Transverse colon (tissue), 4 donors: ENCODE measurements at regions of chr20 and their contacts with region 1.

Region 1: GRCh38 chr20:35360033-35360432 is 51.7 kb downstream of the UQCC1 start:
- DNase-seq: no peak
- H3K4me3 ChIP-seq: no peak overlapping the region
- H3K27ac ChIP-seq: peak overlapping the region; percentile 9 to 55 (median 24)
- H3K4me1 ChIP-seq: peaks cover 6 to 50% (median 35%) of the 10 kb centered on the region in 4 donors
- H3K27me3 ChIP-seq: no peaks in the 10 kb centered on the region
- CTCF ChIP-seq: no peak
- EP300 ChIP-seq: no peak
- POLR2A ChIP-seq: no peak

Region 2: GRCh38 chr20:34955232-34956040 is 404.6 kb before region 1 on chr20 and contains the starts of genes GSS and MYH7B:
- in situ Hi-C with region 1: no loop called
- intact Hi-C with region 1: no loop called
- DNase-seq: peak; percentile 99
- H3K4me3 ChIP-seq: peak within 1 kb of the TSS; percentile 42 to 79 (median 63)
- H3K27ac ChIP-seq: peak within 1 kb of the TSS; percentile 86 to 91 (median 90)
- H3K4me1 ChIP-seq: peaks cover 11 to 42% (median 14%) of the 10 kb centered on the region in 4 donors
- H3K27me3 ChIP-seq: no peaks in the 10 kb centered on the region
- CTCF ChIP-seq: peak; percentile 35 to 84 (median 44)
- EP300 ChIP-seq: no peak
- POLR2A ChIP-seq: peak; percentile 84
- total RNA-seq, gene GSS: 125 to 364 (median 129) TPM
- total RNA-seq, gene MYH7B: 0.20 to 0.75 (median 0.52) TPM

Region 3: DNA sequence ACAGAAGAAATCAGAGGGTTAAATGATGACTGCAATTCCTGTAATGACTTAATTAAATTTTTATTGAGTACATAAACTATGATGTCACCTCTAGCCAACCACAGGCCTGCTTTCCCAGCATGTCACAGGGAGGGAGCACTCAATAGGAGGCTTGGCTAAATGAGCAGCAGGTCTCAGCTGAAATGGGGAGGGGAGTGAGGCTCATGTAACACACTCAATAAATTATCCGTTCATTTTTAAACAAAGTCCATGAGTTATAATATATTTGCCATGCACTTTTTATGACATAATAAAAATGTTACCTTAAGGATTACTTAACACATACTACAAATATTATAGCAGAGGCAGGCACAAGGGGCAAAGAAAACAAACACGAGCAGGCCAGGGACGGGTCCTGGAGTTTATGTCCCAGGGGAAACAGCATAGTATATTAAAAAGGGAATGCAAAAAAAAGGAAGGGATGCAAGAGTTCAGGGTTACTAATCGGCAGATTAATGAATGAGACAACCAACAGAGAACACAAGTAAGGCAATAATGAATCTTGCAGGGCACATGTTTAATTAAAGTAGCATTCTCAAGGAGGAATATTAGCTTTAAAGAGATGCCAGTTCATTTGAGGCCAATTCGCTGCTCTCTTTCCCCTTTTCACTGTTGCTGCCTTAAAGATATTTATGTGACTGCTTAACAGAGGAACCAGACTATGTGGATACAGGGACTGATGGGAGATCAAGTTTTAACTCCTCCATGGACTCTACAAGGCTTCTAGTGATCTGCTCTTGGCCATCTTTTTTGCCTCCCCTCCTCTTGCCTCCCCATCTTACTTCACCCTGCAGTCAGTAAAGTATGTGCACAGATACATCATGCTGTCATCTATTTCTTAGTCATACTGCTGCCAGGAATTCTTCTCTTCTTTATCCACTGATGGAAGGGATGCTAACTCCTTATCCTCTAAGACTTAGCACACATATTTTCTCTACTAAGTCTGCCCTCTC is 40.5 kb before region 1 on chr20:
- in situ Hi-C with region 1: no loop called
- intact Hi-C with region 1: loop called (anchors 1 kb)
- DNase-seq: no peak
- H3K4me3 ChIP-seq: no peak overlapping the region
- H3K27ac ChIP-seq: peak overlapping the region; percentile 80 to 88 (median 83)
- H3K4me1 ChIP-seq: peaks cover 20 to 41% (median 32%) of the 10 kb centered on the region in 4 donors
- H3K27me3 ChIP-seq: no peaks in the 10 kb centered on the region
- CTCF ChIP-seq: no peak
- EP300 ChIP-seq: no peak
- POLR2A ChIP-seq: no peak